ENCODE measurements at regions of chr9 and their contacts with region 1.

Region 1: DNA sequence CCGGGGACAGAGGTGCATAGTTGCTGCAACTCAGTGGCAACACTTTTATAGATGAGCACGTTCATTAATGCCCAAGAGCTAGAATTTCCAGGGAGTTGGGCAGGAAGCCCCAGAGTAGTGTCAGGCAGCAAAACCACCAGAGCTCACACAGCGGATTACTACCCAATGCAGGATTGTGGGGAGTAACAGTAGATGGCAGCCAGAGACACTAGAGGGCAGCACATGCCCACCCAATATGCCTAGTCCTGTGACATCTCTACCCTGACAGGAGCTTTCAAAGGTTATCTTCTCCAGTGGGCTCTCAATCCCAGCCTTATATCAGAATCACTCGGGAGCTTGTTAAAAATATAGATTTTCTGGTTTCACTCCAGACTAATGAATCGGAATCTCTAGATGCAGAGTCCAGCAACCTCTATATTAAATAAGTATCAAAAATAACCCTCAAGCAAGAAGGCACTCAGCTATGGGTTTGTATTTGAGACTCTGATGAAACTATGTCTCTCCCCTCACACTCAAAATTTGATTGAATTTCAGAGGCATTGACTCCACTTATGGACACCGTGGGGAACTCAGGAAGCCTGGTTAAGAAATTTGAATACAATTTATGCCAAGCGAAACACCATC is 58.4 kb upstream of the PHF24 start:
- DNase-seq: peak; percentile 77
- H3K4me3 ChIP-seq: no peak overlapping the region
- H3K27ac ChIP-seq: no peak overlapping the region
- H3K4me1 ChIP-seq: no peaks in the 10 kb centered on the region
- H3K27me3 ChIP-seq: peaks cover 24 to 37% of the 10 kb centered on the region in 2 experiments
- CTCF ChIP-seq: peak; percentile 64 to 85
- POLR2A ChIP-seq: no peak

Region 2: DNA sequence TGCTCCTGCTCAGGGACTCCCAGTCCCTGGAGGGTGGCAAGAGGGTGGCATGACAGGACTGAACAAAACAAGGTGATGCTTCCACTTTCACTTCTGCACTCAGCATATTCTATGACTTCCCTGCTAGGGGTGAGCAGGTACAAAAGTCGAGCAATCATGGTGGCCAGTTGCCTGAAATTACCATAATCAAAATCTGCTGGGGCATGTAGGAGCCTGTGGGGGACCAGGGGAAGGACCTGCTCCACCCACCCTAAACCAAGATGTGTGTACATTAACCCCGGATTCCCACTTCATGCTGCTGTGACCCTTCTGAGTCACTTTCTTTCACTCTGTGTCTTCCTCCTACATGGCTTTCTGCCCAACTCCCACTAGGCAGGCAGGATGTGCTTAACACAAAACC is 14.9 kb before region 1 on chr9:
- CTCF ChIA-PET with region 1: interaction called, 15 read pairs
- POLR2A ChIA-PET with region 1: no interaction called
- dilution Hi-C with region 1: no loop called
- intact Hi-C with region 1: no loop called
- DNase-seq: no peak
- H3K4me3 ChIP-seq: no peak overlapping the region
- H3K27ac ChIP-seq: no peak overlapping the region
- H3K4me1 ChIP-seq: no peaks in the 10 kb centered on the region
- H3K27me3 ChIP-seq: peaks cover 9 to 16% of the 10 kb centered on the region in 2 experiments
- CTCF ChIP-seq: no peak
- POLR2A ChIP-seq: no peak

Region 3: DNA sequence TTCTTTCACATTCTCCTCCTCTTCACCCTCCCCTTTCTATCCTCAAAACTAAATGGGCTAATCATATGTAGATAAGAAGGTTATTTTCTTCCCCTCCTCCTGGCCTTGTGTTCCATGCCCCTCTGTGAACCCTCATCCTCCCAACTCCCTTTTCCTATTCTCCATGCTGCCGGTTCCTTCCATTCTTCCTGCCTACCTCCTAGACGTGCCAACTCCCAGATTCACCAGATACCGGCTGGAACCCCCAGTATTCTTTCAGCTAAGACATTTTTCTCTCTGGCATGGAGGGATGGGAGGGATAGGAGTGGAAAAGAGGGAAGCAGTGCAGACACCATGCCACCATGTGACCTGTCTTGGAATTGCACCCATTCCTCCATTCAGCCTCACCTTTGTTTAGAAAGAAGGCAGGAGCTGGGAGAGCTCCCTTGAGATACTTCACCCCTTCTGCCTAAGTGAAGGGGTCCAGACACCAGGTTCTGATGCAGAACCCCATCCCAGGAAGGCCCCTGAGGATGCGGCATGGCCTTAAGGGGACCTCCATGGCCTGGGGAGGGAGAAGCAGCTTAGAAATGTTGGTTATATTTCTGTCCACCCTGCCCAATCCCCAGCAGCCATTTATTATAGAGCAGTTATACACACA is 94.7 kb after region 1 on chr9:
- CTCF ChIA-PET with region 1: interaction called, 127 read pairs
- POLR2A ChIA-PET with region 1: no interaction called
- dilution Hi-C with region 1: no loop called
- intact Hi-C with region 1: loop called (anchors 1 kb)
- DNase-seq: peak; percentile 64
- H3K4me3 ChIP-seq: no peak overlapping the region
- H3K27ac ChIP-seq: peak overlapping the region; percentile 79
- H3K4me1 ChIP-seq: peaks cover 42% of the 10 kb centered on the region
- H3K27me3 ChIP-seq: no peaks in the 10 kb centered on the region
- CTCF ChIP-seq: peak; percentile 67 to 71
- POLR2A ChIP-seq: no peak

Region 4: GRCh38 chr9:35051069-35051967 is 151.7 kb after region 1 on chr9:
- CTCF ChIA-PET with region 1: interaction called, 258 read pairs
- POLR2A ChIA-PET with region 1: interaction called, 3 read pairs
- dilution Hi-C with region 1: no loop called
- intact Hi-C with region 1: loop called (anchors 1 kb)
- DNase-seq: peak; percentile 56
- H3K4me3 ChIP-seq: no peak overlapping the region
- H3K27ac ChIP-seq: no peak overlapping the region
- H3K4me1 ChIP-seq: no peaks in the 10 kb centered on the region
- H3K27me3 ChIP-seq: no peaks in the 10 kb centered on the region
- CTCF ChIP-seq: peak; percentile 59 to 65
- POLR2A ChIP-seq: no peak

Region 5: GRCh38 chr9:35096035-35096849 is 196.6 kb after region 1 on chr9 and contains the start of gene PIGO:
- CTCF ChIA-PET with region 1: interaction called, 38 read pairs
- POLR2A ChIA-PET with region 1: no interaction called
- dilution Hi-C with region 1: no loop called
- intact Hi-C with region 1: loop called (anchors 1 kb)
- DNase-seq: peak; percentile 78
- H3K4me3 ChIP-seq: peak within 1 kb of the TSS; percentile 69 to 93 (median 74)
- H3K27ac ChIP-seq: peak within 1 kb of the TSS; percentile 85
- H3K4me1 ChIP-seq: peaks cover 2% of the 10 kb centered on the region
- H3K27me3 ChIP-seq: no peaks in the 10 kb centered on the region
- CTCF ChIP-seq: peak; percentile 77 to 99
- POLR2A ChIP-seq: peak; percentile 46
- total RNA-seq, gene PIGO: 17.7 and 23.5 TPM in 2 replicates

Region 6: GRCh38 chr9:35258676-35259474 is 359.2 kb after region 1 on chr9:
- CTCF ChIA-PET with region 1: interaction called, 15 read pairs
- POLR2A ChIA-PET with region 1: no interaction called
- dilution Hi-C with region 1: no loop called
- intact Hi-C with region 1: no loop called
- DNase-seq: peak; percentile 82
- H3K4me3 ChIP-seq: no peak overlapping the region
- H3K27ac ChIP-seq: no peak overlapping the region
- H3K4me1 ChIP-seq: no peaks in the 10 kb centered on the region
- H3K27me3 ChIP-seq: no peaks in the 10 kb centered on the region
- CTCF ChIP-seq: peak; percentile 55 to 67
- POLR2A ChIP-seq: no peak